B cell (primary cell): ENCODE measurements at regions of chr1 and their contacts with region 1.

Region 1: DNA sequence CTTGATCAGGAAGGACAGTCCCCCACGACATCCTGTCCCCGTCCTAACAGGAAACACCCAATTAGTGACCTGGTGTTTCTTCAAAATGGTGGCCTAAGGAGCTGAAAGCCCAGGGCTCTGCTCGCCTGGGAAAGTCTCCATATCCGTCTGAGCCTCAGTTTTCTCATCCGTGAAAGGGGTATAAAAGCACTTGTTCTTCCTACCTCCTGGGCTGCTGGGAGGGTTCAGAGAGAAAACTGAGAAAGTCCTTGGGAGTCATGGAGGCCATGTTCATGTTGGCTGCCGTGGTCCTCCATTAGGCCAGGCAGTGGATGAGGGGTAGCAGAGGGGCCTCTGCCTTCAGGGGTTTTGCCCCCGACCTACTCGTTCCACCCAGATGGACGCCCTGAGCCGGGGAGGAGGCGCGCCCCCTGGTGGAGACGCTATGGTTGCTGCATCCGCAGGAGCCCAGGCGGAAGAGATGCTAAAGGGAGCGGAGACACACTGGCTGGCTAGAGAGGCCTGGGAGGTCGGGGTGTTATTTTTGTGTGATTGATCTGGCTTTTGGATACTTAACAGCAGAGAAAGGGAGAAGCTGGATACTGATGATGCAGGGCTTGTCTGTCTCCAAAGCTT is 113.5 kb downstream of the PRDM2 start:
- DNase-seq: peak; percentile 63
- ATAC-seq: peak; percentile 46
- H3K4me3 ChIP-seq: no peak overlapping the region
- H3K4me3 Mint-ChIP-seq: no peak overlapping the region
- H3K27ac ChIP-seq: no peak overlapping the region
- H3K27ac Mint-ChIP-seq: peak overlapping the region; percentile 10
- H3K4me1 ChIP-seq: peaks cover 0 to 12% of the 10 kb centered on the region in 2 donors
- H3K4me1 Mint-ChIP-seq: peaks cover 38% of the 10 kb centered on the region
- H3K27me3 ChIP-seq: no peaks in the 10 kb centered on the region
- H3K27me3 Mint-ChIP-seq: no peaks in the 10 kb centered on the region
- CTCF ChIP-seq: peak; percentile 67

Region 2: DNA sequence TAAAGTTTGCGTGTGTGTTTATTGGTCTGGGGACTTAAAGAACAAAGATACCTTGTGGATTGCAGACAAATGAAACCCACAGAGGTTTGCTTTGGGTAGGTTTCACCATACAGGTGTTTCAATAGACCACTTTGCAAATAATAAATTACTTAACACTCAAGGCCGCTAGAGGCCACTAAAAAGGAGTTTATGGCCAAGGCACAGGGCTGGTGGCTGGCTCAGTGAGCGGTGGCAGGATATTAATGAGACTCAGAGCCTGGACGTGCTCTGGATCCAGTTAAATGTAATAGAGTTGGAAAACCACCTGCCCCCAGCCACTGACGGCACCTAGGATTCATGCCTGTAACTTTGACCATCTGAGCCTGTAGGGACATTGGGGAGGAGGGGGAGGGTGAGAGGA is 344.2 kb before region 1 on chr1:
- CTCF ChIA-PET with region 1: no interaction called
- POLR2A ChIA-PET with region 1: no interaction called
- intact Hi-C with region 1: loop called (anchors 5 kb)
- DNase-seq: no peak
- ATAC-seq: no peak
- H3K4me3 ChIP-seq: no peak overlapping the region
- H3K4me3 Mint-ChIP-seq: no peak overlapping the region
- H3K27ac ChIP-seq: no peak overlapping the region
- H3K27ac Mint-ChIP-seq: no peak overlapping the region
- H3K4me1 ChIP-seq: no peaks in the 10 kb centered on the region
- H3K4me1 Mint-ChIP-seq: no peaks in the 10 kb centered on the region
- H3K27me3 ChIP-seq: no peaks in the 10 kb centered on the region
- H3K27me3 Mint-ChIP-seq: peaks cover 19% of the 10 kb centered on the region
- CTCF ChIP-seq: no peak